Activated CD4-positive, alpha-beta memory T cell treated with anti-CD3 and anti-CD28 coated beads for 36 hours (primary cell): ENCODE measurements at regions of chr3 and their contacts with region 1.

Region 1: DNA sequence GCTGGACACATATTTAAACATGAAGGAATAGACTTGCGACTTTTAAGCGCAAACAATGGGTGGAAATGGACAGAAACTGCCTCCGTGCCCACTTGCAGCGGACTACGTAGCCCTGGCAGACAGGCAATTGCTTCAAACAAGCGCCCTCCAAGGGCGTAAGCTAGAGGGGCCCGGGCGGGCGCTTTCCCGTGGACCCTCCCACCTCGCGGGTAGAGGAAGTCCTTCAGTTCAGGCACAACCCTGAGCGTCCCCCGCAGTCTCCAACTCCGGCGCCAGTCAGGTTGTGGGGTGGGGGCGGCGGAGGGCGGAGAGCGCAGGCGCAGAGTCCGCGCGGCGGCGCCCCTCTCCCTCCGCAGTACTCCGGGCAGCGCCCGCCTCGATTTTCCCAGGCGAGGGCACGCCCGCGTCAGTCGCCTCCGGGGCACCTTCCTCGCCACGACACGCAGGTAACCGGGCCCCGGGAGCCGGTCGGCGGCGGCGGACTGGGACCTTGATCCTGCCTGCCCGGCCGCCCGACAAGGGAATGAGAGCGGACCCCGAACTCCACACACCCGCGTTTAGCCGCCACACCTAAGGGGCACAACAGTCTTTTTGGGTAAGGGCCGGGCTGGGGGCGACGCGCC is at the start of gene SLC35G2:
- DNase-seq: peak; percentile 50
- H3K4me3 Mint-ChIP-seq: peak within 1 kb of the TSS; percentile 78
- H3K27ac Mint-ChIP-seq: no peak within 1 kb of the TSS
- H3K4me1 Mint-ChIP-seq: peaks cover 19% of the 10 kb centered on the region
- H3K27me3 Mint-ChIP-seq: peaks cover 34% of the 10 kb centered on the region
- total RNA-seq, gene SLC35G2: 2.1 to 2.9 TPM

Region 2: DNA sequence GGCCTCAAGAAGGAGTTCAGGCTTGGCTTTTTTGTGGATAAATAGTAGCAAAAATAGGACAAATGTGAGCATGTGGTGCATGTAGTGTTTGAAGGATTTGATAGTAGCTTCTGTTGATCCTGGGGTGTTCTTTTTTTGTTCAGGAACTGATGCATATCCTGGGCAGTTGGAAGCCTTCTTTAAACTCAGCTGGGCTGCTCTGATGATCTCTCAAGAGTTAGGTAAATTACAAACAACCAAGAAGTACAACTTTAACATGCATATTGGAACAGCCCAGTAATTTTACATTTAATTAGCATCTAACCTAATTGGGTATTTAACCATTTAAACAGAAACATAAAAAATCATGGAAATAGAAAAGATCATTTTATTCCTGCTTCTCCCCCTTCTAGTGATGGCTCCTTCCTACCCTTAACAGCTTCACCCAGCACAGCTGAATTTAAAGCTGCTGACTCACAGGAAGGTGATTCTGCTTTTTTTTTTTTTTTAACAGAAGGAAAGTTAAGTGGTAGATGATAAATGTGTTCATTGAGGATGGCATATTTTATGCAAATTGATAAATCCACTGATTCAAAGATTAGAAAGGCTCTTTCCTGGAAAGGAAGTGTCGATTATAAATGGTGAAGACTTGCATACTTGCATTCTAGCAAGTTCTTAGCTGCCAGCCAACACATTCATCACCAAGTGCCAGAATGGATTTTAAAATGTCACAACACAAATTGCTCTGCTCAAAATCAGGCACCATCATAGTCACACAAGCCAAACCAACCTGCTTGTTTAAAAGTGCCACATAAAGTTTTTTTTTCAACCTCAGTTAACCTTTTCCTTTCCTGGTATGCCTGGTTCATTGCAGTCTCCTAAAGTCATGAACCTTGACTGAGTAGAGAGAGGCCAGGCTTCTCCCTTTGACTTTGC is 20.0 kb after region 1 on chr3:
- CTCF ChIA-PET with region 1: no interaction called
- POLR2A ChIA-PET with region 1: no interaction called
- intact Hi-C with region 1: loop called (anchors 2 kb)
- DNase-seq: no peak
- H3K4me3 Mint-ChIP-seq: no peak overlapping the region
- H3K27ac Mint-ChIP-seq: peak overlapping the region; percentile 43
- H3K4me1 Mint-ChIP-seq: peaks cover 19% of the 10 kb centered on the region
- H3K27me3 Mint-ChIP-seq: no peaks in the 10 kb centered on the region

Region 3: DNA sequence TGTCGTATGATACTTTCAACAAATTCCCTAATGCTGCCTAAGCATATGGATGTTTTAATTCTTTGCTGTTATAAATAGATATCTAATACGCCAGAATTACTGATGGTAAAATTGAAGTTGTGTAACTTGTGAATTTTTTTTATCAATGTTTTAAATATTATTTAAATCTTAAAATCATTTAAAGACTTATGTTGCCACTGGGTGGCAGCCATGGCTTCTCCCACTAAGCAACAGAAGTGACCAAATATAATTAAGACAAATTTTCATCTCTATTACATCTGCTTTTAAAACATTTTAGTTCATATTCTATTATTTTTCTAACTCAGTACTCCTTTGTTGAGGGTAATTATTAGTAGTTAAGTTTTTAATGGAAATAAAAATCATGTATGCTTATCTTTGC is 130.8 kb after region 1 on chr3:
- CTCF ChIA-PET with region 1: no interaction called
- POLR2A ChIA-PET with region 1: no interaction called
- intact Hi-C with region 1: no loop called
- DNase-seq: no peak
- H3K4me3 Mint-ChIP-seq: no peak overlapping the region
- H3K27ac Mint-ChIP-seq: no peak overlapping the region
- H3K4me1 Mint-ChIP-seq: peaks cover 17% of the 10 kb centered on the region
- H3K27me3 Mint-ChIP-seq: no peaks in the 10 kb centered on the region

Region 4: DNA sequence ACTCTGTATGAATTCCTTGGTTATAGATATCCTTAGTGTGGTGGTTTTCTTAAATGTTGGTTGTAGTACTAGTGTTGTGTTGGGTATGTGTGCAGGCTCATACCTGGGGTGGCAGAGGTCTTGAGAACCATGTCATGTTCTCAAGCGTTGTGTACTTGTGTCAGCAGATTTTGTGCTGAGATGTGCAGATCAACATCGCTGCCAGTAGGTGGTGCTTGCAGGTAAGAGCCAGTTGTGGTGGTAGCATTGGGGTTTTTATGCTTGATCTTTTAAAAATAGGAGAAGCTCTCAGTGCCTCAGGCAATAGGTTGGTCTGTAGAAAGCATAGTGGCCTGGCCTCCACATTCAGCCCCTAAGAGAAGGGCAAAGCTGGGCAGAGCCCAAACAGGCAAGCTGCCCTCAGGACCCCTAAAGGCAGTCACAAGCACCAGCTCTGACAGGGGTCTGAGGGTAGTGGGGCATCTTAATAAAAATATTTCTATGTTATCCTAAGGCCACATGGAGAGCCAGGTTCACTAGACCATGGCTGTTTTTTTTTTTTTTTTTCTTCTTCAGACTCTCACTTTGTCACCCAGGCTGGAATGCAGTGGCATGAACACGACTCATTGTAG is 302.9 kb after region 1 on chr3:
- CTCF ChIA-PET with region 1: no interaction called
- POLR2A ChIA-PET with region 1: no interaction called
- intact Hi-C with region 1: no loop called
- DNase-seq: peak; percentile 20
- H3K4me3 Mint-ChIP-seq: no peak overlapping the region
- H3K27ac Mint-ChIP-seq: no peak overlapping the region
- H3K4me1 Mint-ChIP-seq: no peaks in the 10 kb centered on the region
- H3K27me3 Mint-ChIP-seq: peaks cover 8% of the 10 kb centered on the region